ENCODE measurements at regions of chr9 and their contacts with region 1.

Region 1: DNA sequence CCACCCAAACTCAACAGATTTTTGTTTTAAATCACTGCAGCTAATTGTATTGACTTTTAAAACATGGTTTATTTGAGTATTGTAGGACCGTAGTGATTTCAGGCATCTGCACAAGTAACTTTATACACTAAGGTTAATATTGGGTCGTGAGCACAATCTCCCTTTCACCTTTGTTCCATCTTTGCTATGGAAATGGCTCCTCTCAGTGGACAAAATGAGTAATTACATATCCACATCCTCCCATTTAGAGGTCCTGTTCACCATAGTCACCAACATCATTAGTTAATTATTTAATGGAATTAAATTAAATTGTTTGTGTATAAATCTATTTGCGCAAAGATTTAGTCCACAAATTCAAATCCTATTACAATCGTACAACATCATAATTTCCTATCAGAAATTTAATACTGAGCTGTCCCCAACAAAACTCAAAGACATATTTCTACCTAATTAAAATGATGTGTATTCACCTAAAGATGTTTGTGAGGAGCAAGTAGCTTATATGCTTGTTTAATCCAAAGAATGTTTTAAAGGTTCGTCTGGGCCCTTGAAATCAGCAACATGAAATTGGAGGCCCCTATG is 173.0 kb upstream of the DAPK1 start:
- DNase-seq: peak; percentile 64
- H3K4me3 ChIP-seq: no peak overlapping the region
- H3K27ac ChIP-seq: no peak overlapping the region
- H3K4me1 ChIP-seq: peaks cover 2 to 8% of the 10 kb centered on the region in 2 experiments; a peak in 3 of 4 replicates
- H3K27me3 ChIP-seq: no peaks in the 10 kb centered on the region
- CTCF ChIP-seq: peak; percentile 84
- EP300 ChIP-seq: no peak
- RAD21 ChIP-seq: peak; percentile 100

Region 2: DNA sequence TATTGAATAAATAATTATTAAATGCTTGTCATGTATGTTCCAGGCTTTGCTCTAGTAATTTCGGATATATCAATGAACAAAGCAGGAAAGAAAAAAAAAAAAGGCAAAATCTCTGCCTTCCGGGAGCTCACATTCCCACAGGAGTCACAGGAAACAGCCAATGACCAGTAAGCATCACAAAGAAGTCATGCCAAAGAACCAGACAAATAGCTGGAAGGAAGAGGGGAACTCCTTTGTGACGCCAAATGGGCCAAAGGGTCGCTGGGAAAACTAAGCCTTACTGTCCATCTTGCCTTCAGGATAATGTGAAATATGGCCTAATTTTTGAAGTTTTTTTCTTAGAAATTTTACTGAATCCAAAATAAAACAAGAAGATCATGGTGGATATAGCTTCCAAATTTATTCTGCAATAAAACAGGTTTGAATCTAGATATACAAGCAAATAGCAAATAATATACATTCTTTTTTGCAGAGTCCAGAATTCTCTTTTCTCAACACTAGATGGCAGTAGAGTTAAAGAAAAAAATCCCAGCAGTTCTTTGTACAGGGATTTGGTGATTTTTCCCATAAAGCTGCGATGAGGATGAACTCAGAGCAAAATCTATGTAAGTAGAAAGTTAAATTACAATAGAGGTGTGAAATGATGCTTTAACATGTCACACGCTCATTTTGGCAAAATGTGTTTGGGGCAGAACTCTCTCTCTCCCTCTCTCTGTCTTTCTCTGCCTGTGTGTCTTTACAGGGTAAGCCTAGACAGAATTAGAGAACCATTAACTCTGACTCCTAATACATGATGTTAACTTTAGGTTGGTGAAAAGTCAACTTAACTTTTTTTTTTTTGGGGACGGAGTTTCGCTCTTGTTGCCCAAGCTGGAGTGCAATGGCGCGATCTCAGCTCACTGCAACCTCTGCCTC is 910.5 kb before region 1 on chr9:
- CTCF ChIA-PET with region 1: interaction called, 40 read pairs
- POLR2A ChIA-PET with region 1: no interaction called
- DNase-seq: peak; percentile 49
- H3K4me3 ChIP-seq: no peak overlapping the region
- H3K27ac ChIP-seq: no peak overlapping the region
- H3K4me1 ChIP-seq: no peaks in the 10 kb centered on the region
- H3K27me3 ChIP-seq: no peaks in the 10 kb centered on the region
- CTCF ChIP-seq: peak; percentile 81
- EP300 ChIP-seq: no peak
- RAD21 ChIP-seq: peak; percentile 80

Region 3: GRCh38 chr9:86486891-86487837 is 837.5 kb before region 1 on chr9:
- CTCF ChIA-PET with region 1: interaction called, 112 read pairs
- POLR2A ChIA-PET with region 1: no interaction called
- DNase-seq: peak; percentile 59
- H3K4me3 ChIP-seq: no peak overlapping the region; a peak in 1 of 4 replicates
- H3K27ac ChIP-seq: peak overlapping the region in 1 of 2 experiments; percentile 23; a peak in 1 of 4 replicates
- H3K4me1 ChIP-seq: no peaks in the 10 kb centered on the region; a peak in 2 of 4 replicates
- H3K27me3 ChIP-seq: no peaks in the 10 kb centered on the region
- CTCF ChIP-seq: peak; percentile 76
- EP300 ChIP-seq: no peak
- RAD21 ChIP-seq: peak; percentile 95

Region 4: GRCh38 chr9:86494644-86495111 is 830.0 kb before region 1 on chr9:
- CTCF ChIA-PET with region 1: interaction called, 112 read pairs
- POLR2A ChIA-PET with region 1: no interaction called
- DNase-seq: no peak
- H3K4me3 ChIP-seq: no peak overlapping the region
- H3K27ac ChIP-seq: no peak overlapping the region
- H3K4me1 ChIP-seq: no peaks in the 10 kb centered on the region
- H3K27me3 ChIP-seq: no peaks in the 10 kb centered on the region
- CTCF ChIP-seq: no peak
- EP300 ChIP-seq: no peak
- RAD21 ChIP-seq: no peak

Region 5: GRCh38 chr9:86614871-86615849 is 709.5 kb before region 1 on chr9:
- CTCF ChIA-PET with region 1: interaction called, 13 read pairs
- POLR2A ChIA-PET with region 1: no interaction called
- DNase-seq: peak; percentile 33
- H3K4me3 ChIP-seq: no peak overlapping the region
- H3K27ac ChIP-seq: peak overlapping the region in 1 of 2 experiments; percentile 69; a peak in 1 of 4 replicates
- H3K4me1 ChIP-seq: no peaks in the 10 kb centered on the region; a peak in 1 of 4 replicates
- H3K27me3 ChIP-seq: no peaks in the 10 kb centered on the region
- CTCF ChIP-seq: peak; percentile 67
- EP300 ChIP-seq: peak in 1 of 2 experiments; percentile 35; a peak in 1 of 4 replicates
- RAD21 ChIP-seq: peak; percentile 53

Region 6: DNA sequence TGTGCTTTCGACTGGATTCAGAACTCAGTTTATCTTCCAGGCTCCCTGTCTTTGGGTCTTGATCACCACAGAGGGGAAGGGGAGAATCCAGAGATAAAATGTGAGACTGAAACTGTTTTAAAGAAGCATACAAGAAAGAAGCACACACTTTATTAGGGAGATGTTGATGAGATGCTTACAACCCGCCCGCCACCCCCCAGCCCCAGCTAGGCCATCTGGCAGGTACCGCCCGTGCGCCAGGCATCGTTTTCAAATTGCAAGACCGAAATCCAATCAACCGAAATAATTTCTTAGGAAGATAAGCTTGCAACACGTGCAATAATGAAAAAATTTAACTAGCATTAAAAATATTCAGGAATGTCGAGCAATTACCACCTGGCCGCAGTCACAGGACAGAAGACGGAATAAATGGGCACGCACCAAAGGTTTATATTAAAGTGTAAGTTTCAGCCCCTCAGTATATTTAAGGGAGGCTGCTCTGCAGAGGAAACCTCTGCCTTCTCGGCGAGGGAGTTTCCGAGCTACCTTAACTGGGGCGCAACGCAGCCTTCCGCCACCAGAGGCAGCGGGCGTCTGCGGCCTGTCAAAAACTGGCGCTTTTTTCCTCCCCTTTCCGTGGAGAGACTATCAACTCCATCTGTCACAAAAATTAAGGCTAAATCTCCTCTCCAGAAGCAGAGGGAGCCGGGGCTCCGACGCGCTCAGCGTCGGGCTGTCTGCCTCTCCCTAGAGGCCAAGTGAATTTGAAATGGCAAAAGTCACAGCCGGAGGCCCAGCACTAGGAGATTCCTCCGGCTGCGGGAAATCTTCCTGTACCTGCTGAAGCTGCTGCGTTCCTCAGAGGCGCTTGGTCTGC is 376.4 kb before region 1 on chr9:
- CTCF ChIA-PET with region 1: interaction called, 14 read pairs
- POLR2A ChIA-PET with region 1: no interaction called
- DNase-seq: peak; percentile 74
- H3K4me3 ChIP-seq: peak overlapping the region; percentile 48 to 95
- H3K27ac ChIP-seq: peak overlapping the region; percentile 85 to 93
- H3K4me1 ChIP-seq: peaks cover 0 to 12% of the 10 kb centered on the region in 2 experiments; a peak in 1 of 4 replicates
- H3K27me3 ChIP-seq: no peaks in the 10 kb centered on the region
- CTCF ChIP-seq: peak; percentile 79
- EP300 ChIP-seq: peak; percentile 41 to 62; a peak in 1 of 4 replicates
- RAD21 ChIP-seq: peak; percentile 75